K562 (cell line): ENCODE measurements at regions of chr6 and their contacts with region 1.

Region 1: GRCh38 chr6:146857180-146857979 is 258.6 kb downstream of the ADGB start:
- DNase-seq: peak; percentile 85 to 96 (median 86)
- ATAC-seq: peak; percentile 86
- H3K4me3 ChIP-seq: peak overlapping the region; percentile 54
- H3K27ac ChIP-seq: peak overlapping the region; percentile 71
- H3K4me1 ChIP-seq: peaks cover 9 to 28% of the 10 kb centered on the region in 2 experiments
- H3K27me3 ChIP-seq: no peaks in the 10 kb centered on the region
- CTCF ChIP-seq: peak; percentile 96 to 99 (median 98)
- EP300 ChIP-seq: peak; percentile 79
- POLR2A ChIP-seq: peak; percentile 68
- RAD21 ChIP-seq: peak; percentile 99

Region 2: GRCh38 chr6:146876271-146877151 is 19.1 kb after region 1 on chr6:
- CTCF ChIA-PET with region 1: interaction called, 4 read pairs
- POLR2A ChIA-PET with region 1: interaction called, 4 read pairs
- in situ Hi-C with region 1: no loop called
- intact Hi-C with region 1: loop called (anchors 1 kb)
- DNase-seq: peak; percentile 79 to 98 (median 84)
- ATAC-seq: peak; percentile 88
- H3K4me3 ChIP-seq: no peak overlapping the region
- H3K27ac ChIP-seq: peak overlapping the region; percentile 96
- H3K4me1 ChIP-seq: peaks cover 36 to 68% of the 10 kb centered on the region in 2 experiments
- H3K27me3 ChIP-seq: no peaks in the 10 kb centered on the region
- CTCF ChIP-seq: 0 out of 6 replicates have a peak, but pooled peaks of 1 of the 3 experiments have one; percentile 1
- EP300 ChIP-seq: peak; percentile 100
- POLR2A ChIP-seq: no peak
- RAD21 ChIP-seq: peak; percentile 7 to 38; a peak in 3 of 4 replicates

Region 3: DNA sequence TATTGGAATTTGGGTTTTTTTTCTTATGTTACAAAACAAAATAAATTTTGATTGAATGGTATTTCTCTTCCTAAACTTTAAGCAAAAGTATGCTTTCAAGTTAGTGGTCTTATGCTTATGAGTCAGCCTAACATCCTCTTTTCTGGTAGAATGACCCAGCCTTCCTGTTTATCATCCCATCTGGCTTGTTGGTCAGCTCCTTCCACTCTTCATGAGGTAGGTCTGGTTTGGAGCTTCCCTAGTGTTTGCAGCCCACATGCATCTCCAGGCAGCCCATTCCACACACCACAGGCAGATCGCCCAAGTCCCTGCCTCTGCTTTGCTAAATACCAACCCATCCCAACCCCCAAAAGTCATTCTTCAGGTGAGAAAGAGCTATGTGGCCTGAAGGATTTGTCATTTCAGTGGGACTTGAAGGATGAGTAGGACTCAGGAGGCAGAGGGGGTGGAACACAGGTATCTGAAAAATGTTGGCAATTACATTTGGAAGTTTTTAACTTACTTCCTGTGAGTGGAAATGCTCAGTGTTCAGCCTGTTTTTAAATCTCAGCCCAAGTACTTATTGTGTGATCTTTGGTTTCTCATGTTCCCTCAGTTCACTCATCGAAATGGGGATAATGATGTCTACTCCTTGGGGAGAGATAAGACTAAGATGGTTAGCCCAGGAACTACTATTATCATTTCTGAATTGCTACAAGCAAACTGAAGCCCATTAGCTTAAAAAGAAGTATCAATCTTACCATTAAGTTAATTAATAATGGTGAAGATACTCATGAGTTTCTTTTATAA is 35.4 kb after region 1 on chr6:
- CTCF ChIA-PET with region 1: interaction called, 4 read pairs
- POLR2A ChIA-PET with region 1: no interaction called
- in situ Hi-C with region 1: no loop called
- intact Hi-C with region 1: loop called (anchors 1 kb)
- DNase-seq: peak in 3 of 4 experiments; percentile 42 to 90 (median 83)
- ATAC-seq: peak; percentile 62
- H3K4me3 ChIP-seq: peak overlapping the region; percentile 36
- H3K27ac ChIP-seq: peak overlapping the region; percentile 65
- H3K4me1 ChIP-seq: peaks cover 39 to 96% of the 10 kb centered on the region in 2 experiments
- H3K27me3 ChIP-seq: no peaks in the 10 kb centered on the region
- CTCF ChIP-seq: no peak
- EP300 ChIP-seq: peak; percentile 88
- POLR2A ChIP-seq: peak; percentile 73
- RAD21 ChIP-seq: peak; percentile 3 to 36; a peak in 3 of 4 replicates

Region 4: DNA sequence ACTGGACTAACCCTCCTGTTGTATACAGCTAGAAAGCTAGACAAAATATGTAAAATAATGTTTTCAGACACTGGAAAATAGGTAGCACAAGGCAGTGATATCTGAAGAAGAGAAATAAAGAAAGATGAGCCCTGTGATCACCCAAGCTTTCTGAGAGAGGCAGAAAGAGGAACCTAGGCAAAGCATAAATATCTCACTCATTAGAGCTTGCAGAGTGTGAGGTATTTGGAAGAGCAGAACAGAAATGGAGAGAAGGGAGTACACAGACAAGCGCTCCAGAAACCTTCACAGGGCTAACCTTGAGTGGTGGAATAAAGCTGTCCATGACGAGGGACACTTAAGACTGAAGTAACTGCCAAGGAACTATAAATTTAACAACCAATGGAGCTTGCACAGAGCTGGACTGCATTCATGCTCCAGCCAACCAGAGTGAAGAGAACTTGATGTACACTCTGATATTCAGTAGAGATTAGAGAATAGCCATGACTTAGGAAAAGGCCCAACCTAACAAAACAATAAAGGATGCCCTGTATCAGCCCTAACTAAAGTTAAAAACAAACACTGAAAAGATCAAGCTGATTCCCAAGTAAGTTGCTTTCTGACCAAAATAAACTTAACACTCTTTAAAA is 65.9 kb after region 1 on chr6:
- CTCF ChIA-PET with region 1: no interaction called
- POLR2A ChIA-PET with region 1: no interaction called
- in situ Hi-C with region 1: no loop called
- intact Hi-C with region 1: no loop called
- DNase-seq: no peak
- ATAC-seq: peak; percentile 66
- H3K4me3 ChIP-seq: no peak overlapping the region
- H3K27ac ChIP-seq: no peak overlapping the region; the same call in 2 of the 3 replicates
- H3K4me1 ChIP-seq: no peaks in the 10 kb centered on the region; a peak in 2 of 5 replicates
- H3K27me3 ChIP-seq: no peaks in the 10 kb centered on the region
- CTCF ChIP-seq: no peak
- EP300 ChIP-seq: no peak
- POLR2A ChIP-seq: no peak
- RAD21 ChIP-seq: no peak

Region 5: GRCh38 chr6:147000545-147001488 is 143.4 kb after region 1 on chr6:
- CTCF ChIA-PET with region 1: no interaction called
- POLR2A ChIA-PET with region 1: no interaction called
- in situ Hi-C with region 1: no loop called
- intact Hi-C with region 1: loop called (anchors 5 kb)
- DNase-seq: peak; percentile 27 to 74 (median 48)
- ATAC-seq: peak; percentile 86
- H3K4me3 ChIP-seq: no peak overlapping the region
- H3K27ac ChIP-seq: peak overlapping the region; percentile 30; the same call in 2 of the 3 replicates
- H3K4me1 ChIP-seq: peaks cover 0 to 18% of the 10 kb centered on the region in 2 experiments; a peak in 2 of 5 replicates
- H3K27me3 ChIP-seq: no peaks in the 10 kb centered on the region
- CTCF ChIP-seq: no peak
- EP300 ChIP-seq: no peak
- POLR2A ChIP-seq: no peak
- RAD21 ChIP-seq: peak in 1 of 2 experiments; percentile 11; a peak in 1 of 4 replicates

Region 6: GRCh38 chr6:147285087-147285855 is 427.9 kb after region 1 on chr6:
- CTCF ChIA-PET with region 1: interaction called, 3 read pairs
- POLR2A ChIA-PET with region 1: no interaction called
- in situ Hi-C with region 1: no loop called
- intact Hi-C with region 1: loop called (anchors 2 kb)
- DNase-seq: peak; percentile 30 to 52 (median 36)
- ATAC-seq: peak; percentile 75
- H3K4me3 ChIP-seq: no peak overlapping the region
- H3K27ac ChIP-seq: no peak overlapping the region
- H3K4me1 ChIP-seq: no peaks in the 10 kb centered on the region
- H3K27me3 ChIP-seq: no peaks in the 10 kb centered on the region
- CTCF ChIP-seq: peak; percentile 19 to 58 (median 32); a peak in 3 of 6 replicates
- EP300 ChIP-seq: no peak
- POLR2A ChIP-seq: no peak
- RAD21 ChIP-seq: peak; percentile 43 to 71; a peak in 3 of 4 replicates